Activated T-helper 2 cell treated with anti-CD3 and anti-CD28 coated beads, Interferon-gamma antibody, Interleukin-2, Interleukin-4, amounts not matched to agents 10 μg/mL and 5 μg/mL and 100 μg/mL, durations not matched to agents 14 hours and 24 hours and 36 hours (primary cell): ENCODE measurements at regions of chr12 and their contacts with region 1.

Region 1: GRCh38 chr12:47350062-47350408 is 270.3 kb upstream of the AMIGO2 start:
- DNase-seq: no peak
- H3K4me3 Mint-ChIP-seq: peak overlapping the region; percentile 52
- H3K27ac Mint-ChIP-seq: peak overlapping the region; percentile 98
- H3K4me1 Mint-ChIP-seq: peaks cover 58% of the 10 kb centered on the region
- H3K27me3 Mint-ChIP-seq: no peaks in the 10 kb centered on the region

Region 2: DNA sequence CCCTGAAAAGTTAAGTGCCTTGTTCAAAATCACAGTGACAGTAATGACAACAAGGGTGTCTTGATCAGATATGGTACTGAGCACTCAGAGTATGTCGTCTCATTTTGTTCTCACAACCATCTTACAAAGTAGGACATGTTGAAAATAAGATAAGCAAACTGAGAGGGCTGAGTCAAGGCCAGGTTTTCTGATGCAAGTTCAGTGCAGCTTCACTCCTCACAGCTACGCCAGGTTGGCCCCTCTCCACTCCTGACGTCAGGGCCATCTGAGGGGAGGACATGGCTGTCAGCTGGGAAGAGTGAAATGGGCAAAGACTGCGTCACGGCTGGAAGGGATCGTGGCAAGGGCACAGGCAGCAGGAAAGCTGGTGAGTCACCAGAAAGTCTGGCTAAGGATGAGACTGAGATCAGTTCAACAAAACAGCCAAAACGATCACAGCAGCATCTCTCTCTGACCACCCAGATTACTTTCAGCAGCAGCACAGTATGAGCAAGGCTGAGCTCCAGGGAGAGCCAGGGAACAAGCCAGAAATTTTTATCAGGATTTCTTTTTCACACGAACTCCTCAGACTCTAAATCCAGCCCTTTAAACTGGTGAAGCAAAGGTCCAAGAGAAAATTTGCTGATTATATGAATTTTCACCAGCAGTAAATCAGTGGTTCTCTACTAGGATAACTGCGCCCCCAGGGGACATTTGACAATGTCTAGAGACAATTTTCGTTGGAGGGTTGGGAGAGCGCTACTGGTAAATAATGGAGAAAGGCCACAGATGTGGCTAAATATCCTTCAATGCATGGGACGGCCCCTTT is 27.6 kb after region 1 on chr12:
- intact Hi-C with region 1: loop called (anchors 1 kb)
- DNase-seq: no peak
- H3K4me3 Mint-ChIP-seq: no peak overlapping the region
- H3K27ac Mint-ChIP-seq: peak overlapping the region; percentile 61
- H3K4me1 Mint-ChIP-seq: peaks cover 32% of the 10 kb centered on the region
- H3K27me3 Mint-ChIP-seq: no peaks in the 10 kb centered on the region

Region 3: DNA sequence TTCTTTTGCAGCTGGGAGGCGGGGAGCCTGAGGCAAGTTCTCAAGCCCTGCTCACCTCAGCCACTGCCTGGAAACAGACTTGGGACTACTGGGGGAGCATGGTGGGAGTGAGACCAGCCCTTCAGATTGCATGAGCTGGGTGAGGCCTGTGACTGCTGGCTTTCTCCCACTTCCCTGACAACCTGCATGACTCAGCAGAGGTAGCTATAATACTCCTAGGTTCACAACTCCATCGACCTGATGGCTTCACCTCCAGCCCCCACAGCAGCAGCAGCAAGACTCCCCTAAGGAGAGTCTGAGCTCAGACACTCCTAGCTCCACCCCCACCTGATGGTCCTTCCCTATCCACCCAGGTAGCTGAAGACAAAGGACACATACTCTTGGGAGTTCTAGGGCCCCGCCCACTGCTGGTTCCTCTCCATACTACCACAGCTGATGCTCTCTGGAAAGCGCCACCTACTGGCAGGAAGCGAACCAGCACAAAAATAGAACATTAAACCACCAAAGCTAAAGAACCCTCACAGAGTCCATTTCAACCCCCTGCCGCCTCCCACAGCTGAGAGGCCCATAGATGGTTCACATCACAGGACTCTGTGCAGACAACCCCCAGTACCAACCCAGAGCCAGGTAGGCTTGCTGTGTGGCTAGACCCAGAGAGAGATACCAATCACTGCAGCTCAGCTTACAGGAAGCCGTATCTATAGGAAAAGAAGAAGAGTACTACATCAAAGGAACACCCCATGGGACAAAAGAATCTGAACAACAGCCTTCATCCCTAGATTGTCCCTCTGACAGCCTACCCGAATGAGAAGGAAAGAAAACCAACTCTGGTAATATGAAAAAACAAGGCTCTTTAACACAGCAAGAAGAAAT is 287.1 kb after region 1 on chr12:
- intact Hi-C with region 1: no loop called
- DNase-seq: peak; percentile 21
- H3K4me3 Mint-ChIP-seq: no peak overlapping the region
- H3K27ac Mint-ChIP-seq: peak overlapping the region; percentile 40
- H3K4me1 Mint-ChIP-seq: peaks cover 8% of the 10 kb centered on the region
- H3K27me3 Mint-ChIP-seq: no peaks in the 10 kb centered on the region